Activated CD4-positive, alpha-beta T cell treated with anti-CD3 and anti-CD28 coated beads for 36 hours (primary cell): ENCODE measurements at regions of chr2 and their contacts with region 1.

Region 1: GRCh38 chr2:27890146-27890923 is at the starts of genes BABAM2 and RBKS:
- DNase-seq: peak; percentile 94
- ATAC-seq: peak; percentile 87
- H3K4me3 Mint-ChIP-seq: peak within 1 kb of the TSS; percentile 99
- H3K27ac Mint-ChIP-seq: peak within 1 kb of the TSS; percentile 99
- H3K4me1 Mint-ChIP-seq: peaks cover 58% of the 10 kb centered on the region
- H3K27me3 Mint-ChIP-seq: no peaks in the 10 kb centered on the region
- total RNA-seq, gene BABAM2: 58.4 to 81.1 TPM
- total RNA-seq, gene RBKS: 4.6 to 6.4 TPM

Region 2: GRCh38 chr2:27409321-27410073 is 480.8 kb before region 1 on chr2 and contains the start of gene PPM1G:
- CTCF ChIA-PET with region 1: no interaction called
- POLR2A ChIA-PET with region 1: no interaction called
- intact Hi-C with region 1: loop called in 1 of 2 experiments (anchors 1 kb)
- DNase-seq: peak; percentile 98
- ATAC-seq: peak; percentile 96
- H3K4me3 Mint-ChIP-seq: peak within 1 kb of the TSS; percentile 84
- H3K27ac Mint-ChIP-seq: peak within 1 kb of the TSS; percentile 88
- H3K4me1 Mint-ChIP-seq: peaks cover 35% of the 10 kb centered on the region
- H3K27me3 Mint-ChIP-seq: no peaks in the 10 kb centered on the region
- total RNA-seq, gene PPM1G: 115 to 121 TPM

Region 3: DNA sequence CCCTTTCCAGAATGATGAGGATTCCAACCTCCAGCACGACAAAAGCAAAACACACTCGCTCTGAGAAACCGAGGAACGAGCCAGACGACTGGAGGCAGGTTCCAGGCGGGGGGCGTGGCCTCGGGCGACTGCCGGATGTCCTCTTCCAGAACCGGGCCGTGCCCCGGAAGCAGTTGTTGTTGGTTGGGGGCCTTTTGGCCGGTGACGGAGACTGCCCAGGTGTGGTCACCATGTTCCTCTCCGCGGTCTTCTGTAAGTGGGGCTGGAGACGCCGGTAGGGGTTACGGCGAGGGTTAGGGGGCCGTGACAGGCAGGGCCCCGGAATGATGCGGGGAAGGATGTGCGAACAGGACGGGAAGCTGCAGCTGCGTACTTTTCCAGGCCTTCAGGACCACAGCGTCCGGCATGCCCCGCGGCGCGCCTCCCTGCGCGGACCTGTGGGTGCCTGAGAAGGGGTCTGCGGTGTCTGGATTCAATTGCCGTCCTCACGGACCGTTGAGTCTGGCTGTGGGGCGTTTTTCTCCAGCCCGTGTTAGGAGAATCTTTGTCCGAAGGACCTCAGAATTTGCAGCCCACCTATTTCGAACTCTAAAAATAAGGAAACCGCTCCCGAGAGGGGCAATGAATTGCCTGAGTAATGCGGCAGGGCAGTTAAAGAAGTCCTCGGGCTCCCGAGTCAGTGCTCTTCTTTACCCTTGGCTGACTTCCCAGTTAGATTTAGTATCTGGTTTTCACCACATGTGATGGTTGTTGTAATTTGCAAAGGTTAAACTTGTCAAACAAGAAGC is 118.6 kb before region 1 on chr2 and contains the start of gene MRPL33:
- CTCF ChIA-PET with region 1: interaction called, 3 read pairs
- POLR2A ChIA-PET with region 1: no interaction called
- intact Hi-C with region 1: loop called (anchors 1 to 2 kb)
- DNase-seq: peak; percentile 96
- ATAC-seq: peak; percentile 98
- H3K4me3 Mint-ChIP-seq: peak within 1 kb of the TSS; percentile 99
- H3K27ac Mint-ChIP-seq: peak within 1 kb of the TSS; percentile 99
- H3K4me1 Mint-ChIP-seq: peaks cover 42% of the 10 kb centered on the region
- H3K27me3 Mint-ChIP-seq: no peaks in the 10 kb centered on the region
- total RNA-seq, gene MRPL33: 44.7 to 68.0 TPM

Region 4: DNA sequence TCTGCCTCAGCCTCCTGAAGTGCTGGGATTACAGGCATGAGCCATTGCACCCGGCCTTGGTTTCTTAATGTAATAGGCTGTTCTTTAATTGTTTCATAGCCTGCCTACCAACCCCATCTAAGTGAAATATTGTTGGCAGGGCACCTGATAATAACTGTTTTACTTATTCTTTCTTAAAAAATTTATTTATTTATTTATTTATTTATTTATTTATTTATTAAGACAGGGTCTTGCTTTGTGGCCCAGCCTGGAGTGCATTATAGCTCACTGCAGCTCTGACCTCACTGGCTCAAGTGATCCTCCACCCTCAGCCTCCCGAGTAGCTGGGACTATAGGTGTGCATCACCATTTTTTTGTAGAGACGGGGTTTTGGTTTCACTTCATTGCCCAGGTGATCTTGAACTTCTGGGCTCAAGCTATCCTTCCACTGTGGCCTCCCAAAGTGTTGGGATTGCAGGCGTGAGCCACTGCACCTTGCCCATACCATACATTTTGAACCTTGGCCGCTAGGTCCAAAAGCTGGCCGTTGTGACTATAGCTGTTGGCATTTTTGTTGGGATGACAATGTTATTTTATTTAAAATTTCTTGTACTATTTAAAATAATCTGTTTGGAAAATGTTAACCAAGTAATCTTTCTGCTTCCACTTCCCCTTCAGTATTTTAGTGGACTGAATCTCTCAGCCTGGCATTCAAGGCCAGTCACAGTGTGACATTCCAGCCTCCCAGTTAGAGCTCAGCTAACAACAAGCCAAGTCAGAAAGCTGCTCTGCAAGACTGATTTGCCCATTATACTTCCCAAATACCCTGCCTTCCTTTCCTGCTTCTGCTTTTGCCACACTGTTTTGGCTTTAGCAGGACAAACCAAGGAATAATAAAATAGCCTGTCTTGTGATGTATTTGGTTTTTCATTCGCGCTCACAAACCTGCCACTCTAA is 52.5 kb after region 1 on chr2:
- CTCF ChIA-PET with region 1: no interaction called
- POLR2A ChIA-PET with region 1: no interaction called
- intact Hi-C with region 1: no loop called
- DNase-seq: no peak
- ATAC-seq: no peak
- H3K4me3 Mint-ChIP-seq: no peak overlapping the region
- H3K27ac Mint-ChIP-seq: no peak overlapping the region
- H3K4me1 Mint-ChIP-seq: peaks cover 22% of the 10 kb centered on the region
- H3K27me3 Mint-ChIP-seq: no peaks in the 10 kb centered on the region

Region 5: DNA sequence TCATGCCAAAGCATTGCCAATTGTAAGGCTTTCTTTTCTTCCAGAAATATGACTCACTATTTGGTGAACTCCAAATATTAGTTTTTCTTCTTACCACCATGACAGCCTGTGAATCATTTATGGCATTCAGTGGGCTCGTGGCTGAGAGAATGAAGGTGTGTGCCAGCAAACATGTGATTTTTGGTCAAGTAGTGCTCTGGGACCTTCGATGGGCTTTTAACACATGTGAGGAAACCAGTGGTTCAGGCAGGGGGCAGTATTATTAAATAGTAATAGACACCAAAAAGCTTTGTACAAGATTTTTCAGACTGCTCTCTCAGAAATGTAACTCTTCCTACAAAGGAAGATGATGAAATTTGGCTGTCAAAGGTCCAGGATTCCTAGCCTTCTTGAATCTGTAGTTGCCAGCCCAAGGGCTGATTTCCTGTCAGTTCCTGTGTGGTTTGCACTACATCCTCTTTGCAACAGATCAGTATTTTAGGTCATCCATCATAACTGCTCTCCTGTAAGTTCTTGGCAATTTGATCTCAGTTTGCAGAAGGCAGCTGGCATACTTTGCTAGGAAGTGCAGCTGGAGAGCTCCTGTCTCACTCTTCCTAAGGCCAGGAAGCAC is 64.5 kb after region 1 on chr2:
- CTCF ChIA-PET with region 1: no interaction called
- POLR2A ChIA-PET with region 1: no interaction called
- intact Hi-C with region 1: loop called in 1 of 2 experiments (anchors 1 kb)
- DNase-seq: peak; percentile 71
- ATAC-seq: peak; percentile 72
- H3K4me3 Mint-ChIP-seq: peak overlapping the region; percentile 55
- H3K27ac Mint-ChIP-seq: peak overlapping the region; percentile 91
- H3K4me1 Mint-ChIP-seq: peaks cover 73% of the 10 kb centered on the region
- H3K27me3 Mint-ChIP-seq: no peaks in the 10 kb centered on the region

Region 6: GRCh38 chr2:28276076-28276618 is 385.8 kb after region 1 on chr2:
- CTCF ChIA-PET with region 1: no interaction called
- POLR2A ChIA-PET with region 1: interaction called, 3 read pairs
- intact Hi-C with region 1: loop called in 1 of 2 experiments (anchors 10 kb)
- DNase-seq: peak; percentile 45
- ATAC-seq: peak; percentile 97
- H3K4me3 Mint-ChIP-seq: no peak overlapping the region
- H3K27ac Mint-ChIP-seq: peak overlapping the region; percentile 15
- H3K4me1 Mint-ChIP-seq: peaks cover 51% of the 10 kb centered on the region
- H3K27me3 Mint-ChIP-seq: no peaks in the 10 kb centered on the region

Region 7: DNA sequence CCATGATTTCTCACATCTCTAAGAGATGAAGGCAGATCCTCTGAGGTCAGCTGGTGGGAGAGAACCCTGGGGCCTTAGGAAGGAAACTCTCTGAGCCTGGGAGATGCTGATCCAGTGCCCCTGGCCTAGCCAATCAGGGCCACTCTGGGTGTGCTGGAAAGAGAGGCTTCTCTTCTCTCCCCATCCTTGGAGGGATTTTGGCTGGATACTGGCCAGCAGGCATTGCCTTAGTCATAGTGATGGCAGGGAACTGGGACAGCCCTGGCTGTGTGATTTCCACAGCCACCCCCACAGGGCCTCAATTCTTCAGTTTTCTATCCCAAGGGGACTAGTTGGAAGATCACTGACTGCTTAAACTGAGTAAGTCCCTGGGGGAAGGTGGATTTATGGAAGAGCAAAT is 579.0 kb after region 1 on chr2:
- CTCF ChIA-PET with region 1: no interaction called
- POLR2A ChIA-PET with region 1: no interaction called
- intact Hi-C with region 1: loop called in 1 of 2 experiments (anchors 5 kb)
- DNase-seq: no peak
- ATAC-seq: no peak
- H3K4me3 Mint-ChIP-seq: no peak overlapping the region
- H3K27ac Mint-ChIP-seq: no peak overlapping the region
- H3K4me1 Mint-ChIP-seq: peaks cover 50% of the 10 kb centered on the region
- H3K27me3 Mint-ChIP-seq: peaks cover 3% of the 10 kb centered on the region

Region 8: DNA sequence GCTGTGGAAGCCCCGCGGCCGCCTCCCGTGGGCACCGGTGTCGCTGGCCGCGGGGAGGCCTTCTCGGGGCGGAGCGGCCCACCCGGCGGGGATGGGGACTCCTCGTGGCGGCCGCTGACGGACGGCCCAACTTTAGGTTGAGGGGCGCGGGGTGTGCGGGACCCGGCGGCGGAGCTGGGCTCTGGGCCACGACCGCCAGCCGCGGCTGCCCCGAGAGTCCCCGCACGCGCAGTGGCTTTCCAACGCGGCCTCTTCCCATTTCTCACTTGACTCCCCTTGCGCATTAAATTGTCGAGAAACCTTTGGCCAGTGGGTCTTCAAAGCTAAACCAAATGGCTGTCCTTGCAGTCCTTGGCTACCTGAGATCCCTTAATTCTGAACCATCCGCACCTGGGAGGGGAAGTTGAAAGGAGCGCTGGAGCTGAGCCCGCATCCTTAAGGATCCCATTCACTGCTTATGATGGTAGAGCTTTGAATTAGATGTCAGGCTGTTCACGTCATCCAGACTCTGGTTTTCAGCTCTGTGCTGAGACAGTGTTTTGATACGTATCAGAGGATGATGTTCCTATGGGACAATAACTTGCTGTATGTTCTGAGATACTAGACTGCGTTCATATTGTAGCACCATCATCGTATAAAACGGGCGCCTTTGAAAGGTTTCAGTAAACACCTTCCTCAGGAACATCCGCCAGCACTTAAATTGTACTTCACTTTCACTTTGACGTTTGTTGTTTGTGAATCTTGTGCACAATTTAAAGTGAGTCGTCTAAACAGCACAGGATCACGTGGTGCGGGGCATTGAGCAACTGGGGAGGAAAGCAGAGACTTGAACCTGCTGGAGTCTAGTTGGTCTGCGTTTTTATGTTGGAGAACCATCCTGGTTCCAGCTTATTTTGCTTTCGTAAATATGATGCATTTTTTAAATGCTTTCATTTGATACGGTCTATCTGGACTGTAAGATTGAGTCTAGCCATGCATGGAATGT is 1225.8 kb after region 1 on chr2:
- CTCF ChIA-PET with region 1: no interaction called
- POLR2A ChIA-PET with region 1: no interaction called
- intact Hi-C with region 1: loop called in 1 of 2 experiments (anchors 5 kb)
- DNase-seq: peak; percentile 88
- ATAC-seq: peak; percentile 74
- H3K4me3 Mint-ChIP-seq: peak overlapping the region; percentile 90
- H3K27ac Mint-ChIP-seq: peak overlapping the region; percentile 96
- H3K4me1 Mint-ChIP-seq: peaks cover 43% of the 10 kb centered on the region
- H3K27me3 Mint-ChIP-seq: peaks cover 5% of the 10 kb centered on the region